Gastrocnemius medialis (tissue), 4 donors: ENCODE measurements at regions of chr7 and their contacts with region 1.

Region 1: GRCh38 chr7:74289018-74289658 is at the start of gene CLIP2:
- DNase-seq: peak; percentile 41 to 63
- ATAC-seq: peak; percentile 73 to 82
- H3K4me3 ChIP-seq: peak within 1 kb of the TSS; percentile 63 to 76 (median 66)
- H3K27ac ChIP-seq: peak within 1 kb of the TSS; percentile 34 to 70 (median 62)
- H3K4me1 ChIP-seq: peaks cover 8 to 22% of the 10 kb centered on the region in 2 donors
- H3K27me3 ChIP-seq: no peaks in the 10 kb centered on the region
- CTCF ChIP-seq: peak in 1 of 5 experiments; percentile 10
- POLR2A ChIP-seq: peak; percentile 14 to 51
- total RNA-seq, gene CLIP2: 2.0 to 10.0 (median 4.2) TPM

Region 2: GRCh38 chr7:74254129-74254857 is 34.8 kb before region 1 on chr7 and contains the start of gene RFC2:
- in situ Hi-C with region 1: no loop called
- intact Hi-C with region 1: loop called (anchors 1 kb)
- DNase-seq: peak; percentile 91 to 95
- ATAC-seq: peak; percentile 97
- H3K4me3 ChIP-seq: peak within 1 kb of the TSS; percentile 72 to 90 (median 84)
- H3K27ac ChIP-seq: peak within 1 kb of the TSS; percentile 84 to 91 (median 86)
- H3K4me1 ChIP-seq: peaks cover 12 to 18% of the 10 kb centered on the region in 2 donors
- H3K27me3 ChIP-seq: no peaks in the 10 kb centered on the region
- CTCF ChIP-seq: peak; percentile 42 to 71 (median 46)
- POLR2A ChIP-seq: peak; percentile 61 to 64
- total RNA-seq, gene RFC2: 8.2 to 15.2 (median 12.7) TPM

Region 3: GRCh38 chr7:74269757-74270277 is 19.3 kb before region 1 on chr7:
- in situ Hi-C with region 1: no loop called
- intact Hi-C with region 1: loop called (anchors 1 kb)
- DNase-seq: peak in 1 of 2 donors; percentile 15
- ATAC-seq: peak in 1 of 2 donors; percentile 41
- H3K4me3 ChIP-seq: peak overlapping the region; percentile 57 to 68 (median 62)
- H3K27ac ChIP-seq: peak overlapping the region in 2 of 4 donors; percentile 34 to 55
- H3K4me1 ChIP-seq: peaks cover 0 to 5% of the 10 kb centered on the region in 2 donors
- H3K27me3 ChIP-seq: no peaks in the 10 kb centered on the region
- CTCF ChIP-seq: no peak
- POLR2A ChIP-seq: no peak

Region 4: GRCh38 chr7:74324531-74325209 is 35.5 kb after region 1 on chr7:
- in situ Hi-C with region 1: no loop called
- intact Hi-C with region 1: no loop called
- DNase-seq: no peak
- ATAC-seq: no peak
- H3K4me3 ChIP-seq: no peak overlapping the region
- H3K27ac ChIP-seq: no peak overlapping the region
- H3K4me1 ChIP-seq: no peaks in the 10 kb centered on the region
- H3K27me3 ChIP-seq: no peaks in the 10 kb centered on the region
- CTCF ChIP-seq: no peak
- POLR2A ChIP-seq: no peak

Region 5: GRCh38 chr7:74371381-74372341 is 82.5 kb after region 1 on chr7:
- in situ Hi-C with region 1: no loop called
- intact Hi-C with region 1: loop called (anchors 5 kb)
- DNase-seq: no peak
- ATAC-seq: no peak
- H3K4me3 ChIP-seq: no peak overlapping the region
- H3K27ac ChIP-seq: no peak overlapping the region
- H3K4me1 ChIP-seq: no peaks in the 10 kb centered on the region
- H3K27me3 ChIP-seq: peaks cover 0 to 6% (median 3%) of the 10 kb centered on the region in 3 donors
- CTCF ChIP-seq: no peak
- POLR2A ChIP-seq: no peak